Gastrocnemius medialis (tissue), 4 donors: ENCODE measurements at regions of chr10 and their contacts with region 1.

Region 1: DNA sequence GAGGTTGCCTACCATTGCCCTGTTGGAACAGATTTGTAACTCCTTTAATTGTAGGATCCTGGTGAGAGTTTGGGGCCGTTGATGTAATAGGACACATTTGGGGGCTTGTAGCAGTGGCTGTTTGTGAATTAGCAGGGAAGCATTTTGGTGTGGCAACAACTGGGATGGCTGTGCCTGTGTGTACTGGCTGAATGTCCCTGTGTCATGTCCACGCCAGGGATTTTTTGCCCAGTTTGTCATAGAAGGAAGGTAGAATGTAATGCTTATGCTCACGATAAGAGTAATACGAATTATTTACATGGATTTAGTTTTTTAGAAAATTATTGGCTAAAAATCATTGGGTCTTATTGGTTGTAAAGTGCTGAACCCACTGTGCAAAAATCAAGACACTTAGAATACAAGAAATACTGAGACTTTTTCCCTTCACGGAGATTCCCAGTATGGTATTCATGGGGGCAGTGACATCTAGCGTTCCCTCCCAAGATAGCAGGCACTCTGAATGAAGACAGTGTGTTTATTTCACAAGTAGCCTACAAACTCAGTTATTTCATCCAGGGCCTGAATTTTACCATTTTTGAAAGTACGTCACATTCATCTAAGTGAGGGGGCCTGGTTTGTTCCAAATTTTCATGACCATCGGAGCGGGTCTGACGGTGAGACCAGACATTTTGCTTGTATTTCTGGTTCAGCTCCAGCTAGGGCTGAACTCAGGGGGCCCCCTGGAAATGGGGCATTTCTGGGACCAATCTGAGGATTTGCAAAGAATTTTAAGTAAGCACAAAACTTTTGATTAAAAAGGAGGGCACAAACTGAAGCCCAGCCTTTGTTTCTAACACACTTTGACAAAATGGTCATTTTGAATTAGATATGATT is 74.7 kb downstream of the CACNB2 start:
- DNase-seq: no peak
- ATAC-seq: peak in 1 of 2 donors; percentile 70
- H3K4me3 ChIP-seq: peak overlapping the region in 1 of 4 donors; percentile 21
- H3K27ac ChIP-seq: no peak overlapping the region
- H3K4me1 ChIP-seq: no peaks in the 10 kb centered on the region
- H3K27me3 ChIP-seq: no peaks in the 10 kb centered on the region
- CTCF ChIP-seq: peak in 4 of 5 experiments; percentile 43 to 71 (median 59)
- POLR2A ChIP-seq: no peak

Region 2: DNA sequence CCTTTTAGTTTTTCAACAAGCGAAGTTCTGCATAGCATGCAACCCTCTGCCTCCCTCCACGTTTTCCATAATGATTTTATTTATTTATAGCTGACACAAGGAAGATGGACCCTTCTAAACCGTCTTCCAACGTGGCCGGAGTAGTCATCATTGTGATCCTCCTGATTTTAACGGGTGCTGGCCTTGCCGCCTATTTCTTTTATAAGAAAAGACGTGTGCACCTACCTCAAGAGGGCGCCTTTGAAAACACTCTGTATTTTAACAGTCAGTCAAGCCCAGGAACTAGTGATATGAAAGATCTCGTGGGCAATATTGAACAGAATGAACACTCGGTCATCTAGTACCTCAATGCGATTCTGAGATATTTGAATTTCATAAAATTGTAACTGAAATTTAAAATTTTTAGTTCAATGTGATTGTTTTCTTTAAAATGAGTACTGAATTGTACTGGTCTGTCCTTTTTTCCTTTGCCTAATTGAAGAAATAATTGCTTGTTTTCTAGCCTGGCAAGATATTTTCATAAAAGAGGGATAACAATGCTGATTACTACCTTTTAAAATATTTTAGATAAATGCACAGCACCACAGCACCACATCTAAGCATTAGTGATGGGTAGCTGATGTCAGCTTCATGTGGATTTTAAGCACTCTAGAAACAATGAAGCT is 304.7 kb before region 1 on chr10:
- in situ Hi-C with region 1: loop called in 1 of 4 experiments (anchors 25 kb)
- intact Hi-C with region 1: loop called (anchors 2 kb)
- DNase-seq: no peak
- ATAC-seq: no peak
- H3K4me3 ChIP-seq: no peak overlapping the region
- H3K27ac ChIP-seq: no peak overlapping the region
- H3K4me1 ChIP-seq: no peaks in the 10 kb centered on the region
- H3K27me3 ChIP-seq: no peaks in the 10 kb centered on the region
- CTCF ChIP-seq: peak in 2 of 5 experiments; percentile 36 to 44
- POLR2A ChIP-seq: no peak

Region 3: DNA sequence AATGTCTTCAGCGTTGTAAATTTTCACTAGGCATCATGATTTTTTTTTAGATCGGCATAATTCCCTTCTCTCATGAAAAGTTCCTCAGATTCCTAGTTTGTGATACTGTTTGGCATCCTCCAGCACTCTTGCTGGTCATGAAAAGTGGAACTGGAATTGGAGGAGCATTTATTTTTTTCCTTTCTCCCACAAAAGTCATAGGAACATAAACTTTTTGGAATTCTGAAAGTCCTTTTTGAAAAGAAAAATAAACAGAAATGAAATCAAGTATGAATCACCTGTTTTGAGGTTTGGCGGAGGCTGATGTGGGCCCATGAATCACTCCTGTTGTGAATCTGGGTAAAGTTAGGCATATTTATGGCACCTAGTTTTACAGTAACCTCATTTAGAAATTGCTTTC is 57.0 kb before region 1 on chr10:
- in situ Hi-C with region 1: no loop called
- intact Hi-C with region 1: no loop called
- DNase-seq: no peak
- ATAC-seq: no peak
- H3K4me3 ChIP-seq: no peak overlapping the region
- H3K27ac ChIP-seq: no peak overlapping the region
- H3K4me1 ChIP-seq: peaks cover 5 to 7% of the 10 kb centered on the region in 2 donors
- H3K27me3 ChIP-seq: no peaks in the 10 kb centered on the region
- CTCF ChIP-seq: no peak
- POLR2A ChIP-seq: no peak